ENCODE measurements at regions of chrX and their contacts with region 1.

Region 1: GRCh38 chrX:15493118-15493962 is at the start of gene PIR:
- DNase-seq: peak; percentile 85
- H3K4me3 Mint-ChIP-seq: peak within 1 kb of the TSS; percentile 86
- H3K27ac Mint-ChIP-seq: peak within 1 kb of the TSS; percentile 79
- H3K4me1 Mint-ChIP-seq: peaks cover 10% of the 10 kb centered on the region
- H3K27me3 Mint-ChIP-seq: peaks cover 5% of the 10 kb centered on the region
- total RNA-seq, gene PIR: 3.1 and 4.2 TPM in 2 replicates

Region 2: DNA sequence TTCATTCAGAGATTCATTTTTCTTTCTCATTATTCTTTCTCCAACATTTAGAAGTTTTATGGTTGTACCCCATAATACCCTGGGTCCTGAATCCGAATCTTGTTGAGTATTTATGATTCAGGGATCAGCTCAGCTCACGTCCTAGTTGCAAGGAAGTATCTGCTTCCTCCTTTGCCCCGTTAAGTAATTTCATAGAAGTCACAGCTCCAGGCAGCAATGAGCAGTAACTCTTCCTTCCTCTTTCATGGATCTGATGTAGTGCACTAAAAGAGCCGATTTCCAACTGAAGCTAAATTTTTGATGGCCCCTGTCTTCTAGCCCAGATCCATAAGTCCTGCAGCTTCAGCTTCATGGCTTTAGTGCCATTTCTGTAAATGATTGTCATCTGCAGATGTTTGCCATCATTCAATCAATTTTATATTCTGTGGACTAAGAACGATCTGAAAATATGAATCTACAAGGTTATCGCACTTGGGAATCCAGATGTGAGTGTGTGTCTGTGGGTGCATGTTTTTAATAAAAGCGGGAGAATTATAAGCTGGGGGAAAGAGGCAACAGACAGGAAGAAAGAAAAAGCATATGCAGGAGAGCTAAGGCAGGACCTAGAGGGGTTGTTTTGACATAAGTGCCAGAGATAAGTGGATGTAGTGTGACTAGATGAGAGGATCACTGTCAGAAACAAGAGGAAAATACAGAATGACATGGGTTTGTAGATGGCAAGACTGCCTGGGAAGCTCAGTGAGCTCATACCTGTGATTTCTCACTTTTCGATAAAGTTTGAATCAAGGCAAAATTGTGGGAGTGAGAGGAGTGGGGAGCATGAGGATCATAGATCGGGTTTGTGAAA is 126.6 kb before region 1 on chrX:
- intact Hi-C with region 1: no loop called
- DNase-seq: no peak
- H3K4me3 Mint-ChIP-seq: no peak overlapping the region
- H3K27ac Mint-ChIP-seq: no peak overlapping the region
- H3K4me1 Mint-ChIP-seq: no peaks in the 10 kb centered on the region
- H3K27me3 Mint-ChIP-seq: peaks cover 15% of the 10 kb centered on the region

Region 3: DNA sequence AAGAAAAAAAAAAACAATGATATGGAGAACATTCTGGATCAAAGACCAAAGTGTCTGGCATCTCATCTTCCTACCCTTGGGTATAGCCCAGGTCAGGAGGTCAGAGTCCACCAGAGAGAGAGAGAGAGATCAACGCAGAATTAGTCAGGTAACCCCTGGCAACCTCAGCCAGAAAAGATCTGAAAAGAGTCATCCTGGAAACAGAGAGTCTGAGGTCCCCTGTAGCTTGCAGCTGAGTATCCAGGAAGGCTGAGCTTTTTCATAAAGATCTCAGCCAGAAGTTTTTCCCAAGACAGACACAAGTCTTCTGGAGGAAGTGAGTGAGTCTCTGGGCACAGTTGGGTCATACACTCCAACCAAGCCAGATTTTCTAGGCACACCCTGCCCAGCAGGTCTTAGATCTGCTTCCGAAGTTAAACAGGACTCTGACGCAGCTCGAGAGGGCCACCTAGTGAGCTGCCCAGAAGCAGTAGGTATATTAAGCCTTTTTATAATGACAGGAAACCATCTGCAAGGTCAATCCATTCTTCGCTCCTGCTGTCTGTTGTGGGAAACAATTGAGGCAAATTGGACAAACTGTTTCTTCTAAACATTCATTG is 71.7 kb after region 1 on chrX:
- intact Hi-C with region 1: loop called (anchors 2 kb)
- DNase-seq: peak; percentile 68
- H3K4me3 Mint-ChIP-seq: no peak overlapping the region
- H3K27ac Mint-ChIP-seq: no peak overlapping the region
- H3K4me1 Mint-ChIP-seq: no peaks in the 10 kb centered on the region
- H3K27me3 Mint-ChIP-seq: peaks cover 10% of the 10 kb centered on the region

Region 4: GRCh38 chrX:16695079-16695676 is 1201.8 kb after region 1 on chrX:
- intact Hi-C with region 1: loop called (anchors 10 kb)
- DNase-seq: peak; percentile 86
- H3K4me3 Mint-ChIP-seq: no peak overlapping the region
- H3K27ac Mint-ChIP-seq: no peak overlapping the region
- H3K4me1 Mint-ChIP-seq: no peaks in the 10 kb centered on the region
- H3K27me3 Mint-ChIP-seq: no peaks in the 10 kb centered on the region